Activated T-helper 1 cell treated with anti-CD3 and anti-CD28 coated beads, Interleukin-12 subunit alpha, Interleukin-12 subunit beta, Interleukin-2, Interleukin-4 antibody, amounts not matched to agents 30 ng/mL and 10 ng/mL and 1 ng/mL, durations not matched to agents 14 hours and 24 hours and 36 hours (primary cell): ENCODE measurements at regions of chr19 and their contacts with region 1.

Region 1: GRCh38 chr19:55117636-55118391 is at the start of gene PPP1R12C:
- DNase-seq: peak; percentile 96
- H3K4me3 Mint-ChIP-seq: peak within 1 kb of the TSS; percentile 98
- H3K27ac Mint-ChIP-seq: peak within 1 kb of the TSS; percentile 95
- H3K4me1 Mint-ChIP-seq: peaks cover 28% of the 10 kb centered on the region
- H3K27me3 Mint-ChIP-seq: peaks cover 4% of the 10 kb centered on the region
- total RNA-seq, gene PPP1R12C: 114 and 115 TPM in 2 replicates

Region 2: GRCh38 chr19:54463531-54464043 is 654.2 kb before region 1 on chr19 and contains the start of gene LENG9:
- intact Hi-C with region 1: loop called (anchors 1 kb)
- DNase-seq: peak; percentile 96
- H3K4me3 Mint-ChIP-seq: peak within 1 kb of the TSS; percentile 84
- H3K27ac Mint-ChIP-seq: peak within 1 kb of the TSS; percentile 89
- H3K4me1 Mint-ChIP-seq: peaks cover 25% of the 10 kb centered on the region
- H3K27me3 Mint-ChIP-seq: peaks cover 21% of the 10 kb centered on the region
- total RNA-seq, gene LENG9: 8.4 and 11.5 TPM in 2 replicates

Region 3: DNA sequence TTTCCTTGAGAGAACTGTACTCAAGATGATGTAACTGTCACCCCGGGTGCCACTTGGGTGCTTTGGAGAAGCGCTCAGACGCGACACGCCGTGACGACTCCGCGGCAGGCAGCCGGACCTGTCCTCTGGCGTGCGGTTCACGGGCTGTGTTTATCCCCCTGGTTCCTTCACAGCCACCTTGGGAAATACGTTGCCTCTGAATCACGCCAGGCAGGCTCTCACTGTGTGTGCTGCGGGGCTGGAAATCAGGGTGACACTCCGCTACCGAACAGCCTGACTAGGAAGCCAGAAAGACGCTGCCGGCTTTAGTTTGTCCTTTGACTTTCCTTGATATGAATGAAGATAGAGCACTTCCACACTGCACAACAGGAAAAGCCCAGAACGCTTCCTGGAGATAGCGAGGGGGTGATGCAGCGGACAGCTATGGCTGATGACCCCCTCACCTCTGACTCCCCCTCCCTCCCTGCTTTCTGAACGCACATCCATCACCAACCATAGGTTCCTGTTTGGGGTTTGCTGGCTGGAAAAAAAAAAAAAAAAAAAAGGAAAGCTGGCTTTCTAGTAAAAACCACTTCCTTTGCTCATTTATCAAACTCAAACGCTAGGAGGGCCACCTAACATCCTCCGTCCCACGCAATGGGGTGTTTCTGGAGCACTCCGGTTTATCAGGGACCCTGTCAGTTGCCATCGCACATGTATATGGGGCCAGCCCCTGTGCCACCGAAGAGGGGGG is 76.0 kb before region 1 on chr19:
- intact Hi-C with region 1: no loop called
- DNase-seq: peak; percentile 5
- H3K4me3 Mint-ChIP-seq: peak overlapping the region; percentile 80
- H3K27ac Mint-ChIP-seq: peak overlapping the region; percentile 86
- H3K4me1 Mint-ChIP-seq: peaks cover 20% of the 10 kb centered on the region
- H3K27me3 Mint-ChIP-seq: no peaks in the 10 kb centered on the region

Region 4: DNA sequence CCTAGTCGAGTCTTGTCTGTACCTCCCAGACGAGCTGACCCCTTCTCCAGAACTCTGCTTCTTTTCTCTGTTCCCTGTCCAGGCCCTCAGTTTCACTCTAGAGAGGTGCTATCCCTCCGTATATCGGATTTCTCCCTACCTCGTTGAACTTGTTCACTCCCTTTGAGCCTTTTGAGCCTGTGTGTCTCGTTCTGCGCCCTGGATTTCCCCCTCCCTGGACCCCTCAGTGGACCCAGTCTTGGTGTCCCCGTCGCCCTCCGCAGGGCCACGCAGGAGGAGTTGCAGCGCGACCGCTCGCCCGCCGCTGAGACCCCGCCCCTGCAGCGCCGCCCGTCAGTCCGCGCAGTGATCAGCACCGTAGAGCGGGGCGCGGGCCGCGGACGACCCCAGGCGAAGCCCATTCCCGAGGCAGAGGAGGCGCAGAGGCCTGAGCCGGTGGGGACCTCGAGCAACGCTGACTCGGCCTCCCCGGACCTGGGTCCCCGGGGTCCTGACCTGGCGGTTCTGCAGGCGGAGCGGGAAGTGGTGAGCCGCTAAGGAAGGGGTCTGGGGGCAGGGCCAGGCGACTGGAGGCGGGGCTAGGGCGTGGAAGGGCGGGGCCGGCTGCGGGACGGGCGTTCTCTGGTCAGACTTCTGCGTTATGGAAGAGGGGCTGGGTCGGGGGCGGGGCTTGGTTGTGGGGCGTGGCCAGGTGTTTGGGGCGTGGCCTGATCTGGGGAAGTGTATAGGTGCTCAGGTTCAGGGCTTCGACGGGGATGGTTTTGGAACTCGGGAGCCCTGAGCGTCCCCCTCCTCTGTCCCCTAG is 36.6 kb before region 1 on chr19:
- intact Hi-C with region 1: loop called (anchors 1 kb)
- DNase-seq: peak; percentile 92
- H3K4me3 Mint-ChIP-seq: peak overlapping the region; percentile 88
- H3K27ac Mint-ChIP-seq: peak overlapping the region; percentile 67
- H3K4me1 Mint-ChIP-seq: peaks cover 23% of the 10 kb centered on the region
- H3K27me3 Mint-ChIP-seq: peaks cover 35% of the 10 kb centered on the region

Region 5: GRCh38 chr19:55279770-55280643 is 162.2 kb after region 1 on chr19 and contains the start of gene HSPBP1:
- intact Hi-C with region 1: loop called (anchors 1 kb)
- DNase-seq: peak; percentile 95
- H3K4me3 Mint-ChIP-seq: peak within 1 kb of the TSS; percentile 99
- H3K27ac Mint-ChIP-seq: peak within 1 kb of the TSS; percentile 96
- H3K4me1 Mint-ChIP-seq: peaks cover 51% of the 10 kb centered on the region
- H3K27me3 Mint-ChIP-seq: peaks cover 7% of the 10 kb centered on the region
- total RNA-seq, gene HSPBP1: 66.4 and 69.6 TPM in 2 replicates

Region 6: GRCh38 chr19:55385740-55386529 is 268.1 kb after region 1 on chr19 and contains the start of gene RPL28:
- intact Hi-C with region 1: loop called (anchors 1 kb)
- DNase-seq: peak; percentile 99
- H3K4me3 Mint-ChIP-seq: peak within 1 kb of the TSS; percentile 99
- H3K27ac Mint-ChIP-seq: peak within 1 kb of the TSS; percentile 96
- H3K4me1 Mint-ChIP-seq: peaks cover 43% of the 10 kb centered on the region
- H3K27me3 Mint-ChIP-seq: no peaks in the 10 kb centered on the region
- total RNA-seq, gene RPL28: 1,835 and 1,847 TPM in 2 replicates

Region 7: DNA sequence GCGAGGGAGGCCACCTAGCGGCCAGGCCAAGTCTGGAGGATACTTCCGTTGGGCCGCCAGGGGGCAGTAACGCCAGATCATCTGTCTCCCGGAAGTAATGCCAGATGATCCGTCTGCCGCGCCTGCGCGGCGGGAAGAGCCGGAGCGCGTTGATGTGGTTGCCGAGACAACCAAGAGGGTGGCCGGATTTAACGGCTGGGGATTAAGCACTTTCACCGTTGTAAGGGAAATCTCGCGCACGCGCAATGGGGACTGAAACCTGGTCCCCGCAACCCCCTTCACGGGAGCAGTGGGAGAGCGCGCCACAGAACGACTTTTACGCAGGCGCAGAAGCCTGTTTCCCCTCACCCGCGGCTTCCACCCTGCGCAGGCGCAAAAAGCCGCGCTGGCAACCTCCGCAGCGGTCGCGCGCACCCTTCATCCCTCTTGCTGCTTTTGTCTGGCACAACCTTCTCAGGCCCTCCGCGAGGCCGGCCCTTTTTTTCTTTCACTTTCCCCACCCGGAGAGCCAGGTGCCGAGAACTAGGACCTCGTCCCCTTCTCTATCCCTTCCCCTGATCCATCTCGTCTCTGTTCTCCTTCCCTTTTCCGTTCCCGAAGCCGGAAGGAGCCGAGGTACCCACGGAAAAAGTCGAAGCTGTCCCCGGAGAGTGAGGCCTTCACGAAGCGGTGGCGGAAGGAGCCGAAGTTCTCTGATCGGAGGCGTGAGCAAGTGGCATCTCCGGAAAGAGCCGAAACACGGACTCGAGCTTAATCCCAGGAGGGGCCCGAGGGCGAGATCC is 536.1 kb after region 1 on chr19:
- intact Hi-C with region 1: loop called (anchors 1 kb)
- DNase-seq: peak; percentile 99
- H3K4me3 Mint-ChIP-seq: peak overlapping the region; percentile 93
- H3K27ac Mint-ChIP-seq: peak overlapping the region; percentile 99
- H3K4me1 Mint-ChIP-seq: peaks cover 43% of the 10 kb centered on the region
- H3K27me3 Mint-ChIP-seq: no peaks in the 10 kb centered on the region

Region 8: GRCh38 chr19:56314562-56315077 is 1196.8 kb after region 1 on chr19 and contains the start of gene ZSCAN5A:
- intact Hi-C with region 1: loop called (anchors 5 kb)
- DNase-seq: peak; percentile 92
- H3K4me3 Mint-ChIP-seq: peak within 1 kb of the TSS; percentile 93
- H3K27ac Mint-ChIP-seq: peak within 1 kb of the TSS; percentile 99
- H3K4me1 Mint-ChIP-seq: peaks cover 29% of the 10 kb centered on the region
- H3K27me3 Mint-ChIP-seq: no peaks in the 10 kb centered on the region
- total RNA-seq, gene ZSCAN5A: 7.3 and 7.5 TPM in 2 replicates